Gastrocnemius medialis (tissue), 4 donors: ENCODE measurements at regions of chr10 and their contacts with region 1.

Region 1: DNA sequence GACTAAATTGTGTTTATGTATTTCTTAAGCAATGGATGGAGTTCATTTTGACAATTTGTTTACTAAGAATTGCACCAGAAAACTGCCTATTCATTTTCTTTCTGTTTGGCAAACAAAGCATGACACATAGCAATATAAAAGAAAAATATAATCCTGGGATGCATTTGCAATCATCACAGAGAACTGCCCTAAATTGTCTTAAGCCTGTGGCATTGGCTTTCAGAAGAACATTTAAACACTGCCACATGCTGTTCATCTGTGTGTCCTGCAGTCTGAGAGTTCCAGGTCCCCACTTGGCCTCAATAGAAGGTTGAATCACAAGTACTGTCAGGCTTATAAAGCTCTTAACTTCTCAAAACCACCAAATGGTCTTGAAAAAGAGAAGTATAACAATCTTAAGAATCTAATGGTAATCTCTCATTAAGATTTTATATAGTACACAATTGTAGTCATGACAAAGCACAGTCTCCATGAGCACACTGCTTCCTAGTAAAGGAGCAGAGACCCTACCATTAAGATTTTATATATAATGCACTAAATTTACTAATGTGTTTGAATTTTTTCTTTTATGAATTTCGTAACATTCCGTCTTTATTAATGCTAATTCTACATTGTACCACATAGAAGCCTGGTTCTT is 29.9 kb downstream of the RNLS start:
- DNase-seq: peak; percentile 40 to 71
- ATAC-seq: peak; percentile 98 to 99
- H3K4me3 ChIP-seq: no peak overlapping the region
- H3K27ac ChIP-seq: no peak overlapping the region
- H3K4me1 ChIP-seq: peaks cover 0 to 6% of the 10 kb centered on the region in 2 donors
- H3K27me3 ChIP-seq: no peaks in the 10 kb centered on the region
- CTCF ChIP-seq: peak; percentile 71 to 83 (median 79)
- POLR2A ChIP-seq: no peak

Region 2: DNA sequence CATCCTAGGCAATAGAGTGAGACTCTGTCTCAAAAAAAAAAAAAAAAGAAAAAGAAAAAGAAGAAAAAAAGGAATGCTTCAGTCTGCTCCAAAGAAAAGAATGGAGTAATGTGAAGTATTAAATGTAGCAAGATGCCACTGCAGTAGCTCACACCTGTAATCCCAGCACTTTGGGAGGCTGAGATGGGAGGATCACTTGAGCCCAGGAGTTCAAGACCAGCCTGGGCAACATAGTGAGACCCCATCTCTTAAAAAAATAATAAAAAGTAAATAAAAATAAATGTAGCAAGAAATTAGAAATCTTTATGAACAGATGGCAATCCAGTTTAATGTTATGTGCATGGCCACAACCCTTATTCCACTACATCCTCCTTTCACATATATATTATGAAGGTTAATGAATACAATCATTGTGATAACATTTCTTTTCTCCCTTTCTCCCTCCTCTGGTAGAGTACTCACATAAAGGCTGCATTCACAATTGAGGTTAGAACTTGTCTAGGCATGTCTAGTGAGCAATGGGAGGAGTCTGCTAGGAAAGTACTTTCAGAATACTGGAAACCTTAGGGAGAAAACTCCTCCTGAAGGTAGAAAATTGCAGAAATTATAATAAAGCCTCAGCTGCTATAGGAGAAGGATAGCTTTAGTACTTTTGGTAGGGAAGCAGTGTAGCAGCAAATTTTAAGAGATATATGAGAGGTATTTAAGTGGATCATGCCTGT is 710.3 kb before region 1 on chr10:
- in situ Hi-C with region 1: loop called in 1 of 4 experiments (anchors 25 kb)
- intact Hi-C with region 1: no loop called
- DNase-seq: no peak
- ATAC-seq: no peak
- H3K4me3 ChIP-seq: no peak overlapping the region
- H3K27ac ChIP-seq: no peak overlapping the region
- H3K4me1 ChIP-seq: no peaks in the 10 kb centered on the region
- H3K27me3 ChIP-seq: no peaks in the 10 kb centered on the region
- CTCF ChIP-seq: no peak
- POLR2A ChIP-seq: no peak

Region 3: DNA sequence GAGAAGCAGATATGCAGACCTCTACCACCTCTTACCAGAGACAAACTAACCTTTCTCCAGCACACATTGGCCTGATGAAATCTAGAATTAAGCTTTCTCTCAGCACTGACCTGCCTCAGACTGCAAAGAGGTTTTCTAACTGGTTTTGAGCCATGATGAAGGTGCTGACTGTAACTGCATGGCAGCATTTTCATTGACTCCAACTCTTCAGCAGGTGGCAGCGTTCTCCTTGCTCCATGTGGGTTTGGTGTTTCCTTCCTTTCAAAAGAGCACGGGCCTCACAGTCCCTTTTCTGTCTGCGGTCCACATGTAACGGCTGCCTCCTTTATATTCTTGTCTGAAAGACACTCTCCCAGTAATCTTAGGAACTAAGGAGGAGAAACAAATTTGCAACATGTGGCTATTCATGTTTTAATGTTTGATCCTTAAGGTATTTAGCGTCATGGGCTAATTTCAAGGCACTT is 702.5 kb before region 1 on chr10:
- in situ Hi-C with region 1: loop called (anchors 5 to 25 kb)
- intact Hi-C with region 1: loop called (anchors 1 kb)
- DNase-seq: peak; percentile 60 to 67
- ATAC-seq: peak; percentile 98 to 100
- H3K4me3 ChIP-seq: no peak overlapping the region
- H3K27ac ChIP-seq: peak overlapping the region in 2 of 4 donors; percentile 27
- H3K4me1 ChIP-seq: peaks cover 0 to 3% of the 10 kb centered on the region in 2 donors
- H3K27me3 ChIP-seq: no peaks in the 10 kb centered on the region
- CTCF ChIP-seq: peak; percentile 49 to 84 (median 66)
- POLR2A ChIP-seq: no peak

Region 4: DNA sequence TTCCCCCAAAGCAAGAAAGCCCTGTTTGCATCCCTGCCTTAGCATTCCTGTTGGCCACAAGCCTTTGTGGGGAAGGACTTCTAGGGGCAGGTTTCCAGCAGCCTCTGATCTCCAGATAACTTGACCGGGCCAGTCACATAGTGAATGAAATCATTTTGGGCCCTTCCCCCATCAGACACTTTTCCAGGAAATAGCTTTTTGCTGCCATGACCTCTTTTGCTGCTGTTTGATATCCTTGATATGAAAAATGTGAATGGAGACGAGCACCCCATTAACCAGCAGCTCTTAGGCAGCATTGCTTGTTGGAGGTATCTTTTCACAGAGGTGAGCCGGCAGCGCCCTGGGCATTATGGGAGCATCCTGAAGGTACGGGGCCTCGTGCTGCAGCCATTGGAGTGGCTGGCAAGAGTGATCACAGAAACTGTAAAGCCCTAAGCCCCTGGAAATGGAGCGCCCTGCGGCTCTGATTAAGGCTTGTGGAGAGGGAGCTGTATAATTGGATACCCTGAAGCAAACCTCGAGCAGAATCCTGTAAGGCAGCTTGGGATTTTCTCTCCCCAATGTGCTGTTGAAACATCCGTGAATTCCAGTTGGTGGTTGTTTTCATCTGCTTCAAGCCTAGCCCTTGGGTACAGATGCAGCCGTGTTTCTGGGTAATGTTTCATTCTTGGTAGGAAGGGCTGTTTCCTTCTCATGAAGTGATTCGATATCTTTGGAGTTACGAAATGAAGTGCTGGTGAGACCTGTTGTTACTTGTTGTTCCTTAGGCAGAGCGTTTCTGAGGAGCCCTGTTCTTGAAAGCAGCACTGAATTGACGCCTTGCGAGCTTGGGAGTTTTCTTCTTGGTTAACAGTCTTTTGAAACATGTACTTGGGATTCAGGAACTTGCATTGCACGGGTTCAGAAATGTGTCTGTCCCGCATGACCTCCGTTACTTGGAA is 510.8 kb before region 1 on chr10:
- in situ Hi-C with region 1: no loop called
- intact Hi-C with region 1: no loop called
- DNase-seq: peak; percentile 72 to 76
- ATAC-seq: peak; percentile 94 to 95
- H3K4me3 ChIP-seq: peak overlapping the region in 3 of 4 donors; percentile 14 to 16 (median 16)
- H3K27ac ChIP-seq: peak overlapping the region; percentile 73 to 84 (median 80)
- H3K4me1 ChIP-seq: peaks cover 19 to 25% of the 10 kb centered on the region in 2 donors
- H3K27me3 ChIP-seq: no peaks in the 10 kb centered on the region
- CTCF ChIP-seq: no peak
- POLR2A ChIP-seq: peak in 1 of 2 donors; percentile 0

Region 5: DNA sequence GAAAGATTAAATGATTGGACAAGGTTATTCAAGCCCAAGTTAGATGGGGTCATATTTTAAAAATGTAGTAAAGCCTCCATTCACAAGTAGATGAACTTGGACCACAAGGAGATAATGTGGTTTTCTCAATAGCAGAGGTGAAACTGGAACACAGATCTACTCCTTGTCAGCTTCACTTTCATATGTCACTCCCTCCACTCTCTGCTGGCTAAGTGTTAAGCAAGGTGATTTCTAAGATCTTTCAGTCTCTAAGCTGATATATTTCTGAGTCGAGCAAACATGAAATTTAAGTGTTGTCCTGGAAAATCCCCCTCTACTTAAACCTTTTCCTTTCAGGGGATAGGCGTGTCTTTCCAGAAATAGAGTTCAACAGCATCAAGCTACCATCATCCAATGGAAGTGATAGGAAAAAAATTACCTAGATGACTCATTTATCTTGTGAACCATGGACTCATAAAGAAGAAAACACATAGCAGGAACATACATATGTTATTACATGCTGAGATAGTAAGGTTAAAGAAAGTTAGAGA is 414.9 kb before region 1 on chr10:
- in situ Hi-C with region 1: loop called in 1 of 4 experiments (anchors 25 kb)
- intact Hi-C with region 1: no loop called
- DNase-seq: no peak
- ATAC-seq: no peak
- H3K4me3 ChIP-seq: no peak overlapping the region
- H3K27ac ChIP-seq: no peak overlapping the region
- H3K4me1 ChIP-seq: peaks cover 0 to 1% of the 10 kb centered on the region in 2 donors
- H3K27me3 ChIP-seq: no peaks in the 10 kb centered on the region
- CTCF ChIP-seq: no peak
- POLR2A ChIP-seq: no peak

Region 6: GRCh38 chr10:88386821-88387773 is 166.1 kb before region 1 on chr10:
- in situ Hi-C with region 1: no loop called
- intact Hi-C with region 1: loop called (anchors 5 kb)
- DNase-seq: peak; percentile 16 to 18
- ATAC-seq: peak; percentile 75 to 76
- H3K4me3 ChIP-seq: peak overlapping the region in 3 of 4 donors; percentile 16 to 30 (median 29)
- H3K27ac ChIP-seq: peak overlapping the region; percentile 22 to 56 (median 41)
- H3K4me1 ChIP-seq: peaks cover 12 to 20% of the 10 kb centered on the region in 2 donors
- H3K27me3 ChIP-seq: no peaks in the 10 kb centered on the region
- CTCF ChIP-seq: no peak
- POLR2A ChIP-seq: peak in 1 of 2 donors; percentile 26

Region 7: DNA sequence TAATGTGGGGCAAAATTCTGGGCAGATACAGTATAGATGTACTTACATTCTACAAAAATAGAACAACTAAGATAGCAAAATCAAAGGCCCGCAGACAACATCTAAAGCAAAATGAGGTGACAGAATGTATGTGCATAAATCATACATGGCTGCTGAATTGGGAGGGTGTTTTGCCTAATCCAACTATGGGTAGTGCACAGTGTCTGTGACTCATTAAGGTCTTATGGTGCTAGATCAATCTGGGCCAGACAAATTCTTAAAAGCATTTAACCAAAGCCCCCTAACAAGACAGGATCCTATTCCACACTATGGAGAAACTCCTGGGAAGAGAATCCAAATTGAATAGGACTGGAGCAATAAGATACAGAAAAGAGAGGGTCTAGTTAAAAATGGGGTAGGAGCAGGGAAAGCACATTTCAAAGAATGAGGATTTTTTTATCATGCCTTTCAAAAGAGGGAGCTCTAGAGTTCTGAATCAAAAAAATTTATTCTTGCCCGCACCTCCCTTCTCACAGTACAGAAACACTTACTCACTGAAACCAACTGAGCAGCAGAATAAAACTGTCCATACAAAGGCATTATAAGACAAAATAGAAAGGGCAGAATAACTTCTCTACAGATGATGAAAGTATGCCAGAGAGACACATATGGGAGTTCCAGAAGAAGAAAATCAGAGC is 151.4 kb before region 1 on chr10:
- in situ Hi-C with region 1: loop called in 2 of 4 experiments (anchors 5 to 10 kb)
- intact Hi-C with region 1: loop called (anchors 1 kb)
- DNase-seq: no peak
- ATAC-seq: peak; percentile 50 to 62
- H3K4me3 ChIP-seq: no peak overlapping the region
- H3K27ac ChIP-seq: no peak overlapping the region
- H3K4me1 ChIP-seq: peaks cover 0 to 9% of the 10 kb centered on the region in 2 donors
- H3K27me3 ChIP-seq: no peaks in the 10 kb centered on the region
- CTCF ChIP-seq: peak in 1 of 5 experiments; percentile 10
- POLR2A ChIP-seq: no peak